WTC11 (cell line): ENCODE measurements at regions of chr6 and their contacts with region 1.

Region 1: DNA sequence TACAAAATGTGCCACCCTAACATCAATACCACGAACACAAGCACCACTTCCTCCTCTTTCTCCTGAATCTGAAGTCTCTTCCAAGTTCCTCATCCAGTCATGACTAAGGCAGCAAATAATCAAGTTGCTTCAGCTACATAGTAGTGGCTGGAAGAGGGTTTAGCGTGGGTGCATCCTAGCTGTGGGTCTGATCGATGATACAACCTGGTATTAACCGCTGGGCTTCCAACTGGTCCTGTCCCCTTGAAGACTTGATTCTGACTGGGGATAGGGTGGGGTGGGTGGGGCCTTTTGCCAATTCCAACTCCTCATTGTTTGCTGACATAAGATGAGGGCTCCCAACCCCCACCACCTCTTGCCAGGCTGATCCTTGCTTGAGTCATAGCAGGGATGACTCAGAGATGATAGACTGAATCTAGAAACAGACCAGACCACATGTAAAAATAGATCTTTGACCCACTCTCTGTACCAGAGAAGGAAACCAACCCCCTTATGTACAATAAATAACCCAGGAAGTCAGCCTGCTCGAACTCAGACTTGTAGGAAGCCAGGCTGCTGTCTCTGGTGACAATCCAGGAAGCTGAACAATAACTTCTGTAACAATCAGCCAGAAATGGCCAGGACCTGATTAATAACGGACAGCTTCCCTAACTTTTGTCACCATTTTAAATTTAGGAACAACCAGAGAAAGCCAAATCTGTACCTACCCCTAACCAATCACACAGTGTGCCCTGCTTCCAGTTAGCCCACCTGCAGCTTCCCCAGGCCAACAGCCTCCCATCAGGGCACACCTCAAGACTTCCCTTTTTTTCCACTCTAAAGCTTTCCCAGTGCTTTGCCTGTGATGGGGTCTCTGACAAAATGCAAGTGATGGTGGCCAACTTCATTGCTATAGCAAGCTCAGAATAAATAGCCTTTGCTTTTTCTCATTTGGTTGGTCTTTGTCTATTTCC is 68.9 kb upstream of the FAM184A start:
- DNase-seq: no peak
- ATAC-seq: no peak
- H3K4me3 Mint-ChIP-seq: no peak overlapping the region
- H3K27ac Mint-ChIP-seq: no peak overlapping the region
- H3K4me1 Mint-ChIP-seq: peaks cover 4% of the 10 kb centered on the region
- H3K27me3 Mint-ChIP-seq: no peaks in the 10 kb centered on the region
- CTCF ChIP-seq: no peak

Region 2: GRCh38 chr6:119129148-119129967 is 18.0 kb before region 1 on chr6:
- CTCF ChIA-PET with region 1: interaction called, 17 read pairs
- POLR2A ChIA-PET with region 1: no interaction called
- DNase-seq: no peak
- ATAC-seq: peak; percentile 77
- H3K4me3 Mint-ChIP-seq: no peak overlapping the region
- H3K27ac Mint-ChIP-seq: no peak overlapping the region
- H3K4me1 Mint-ChIP-seq: peaks cover 34% of the 10 kb centered on the region
- H3K27me3 Mint-ChIP-seq: no peaks in the 10 kb centered on the region
- CTCF ChIP-seq: peak; percentile 75

Region 3: GRCh38 chr6:119158057-119158848 is 10.9 kb after region 1 on chr6:
- CTCF ChIA-PET with region 1: interaction called, 10 read pairs
- POLR2A ChIA-PET with region 1: no interaction called
- DNase-seq: no peak
- ATAC-seq: peak; percentile 44
- H3K4me3 Mint-ChIP-seq: no peak overlapping the region
- H3K27ac Mint-ChIP-seq: no peak overlapping the region
- H3K4me1 Mint-ChIP-seq: no peaks in the 10 kb centered on the region
- H3K27me3 Mint-ChIP-seq: no peaks in the 10 kb centered on the region; the same call in 1 of the 2 replicates
- CTCF ChIP-seq: no peak

Region 4: DNA sequence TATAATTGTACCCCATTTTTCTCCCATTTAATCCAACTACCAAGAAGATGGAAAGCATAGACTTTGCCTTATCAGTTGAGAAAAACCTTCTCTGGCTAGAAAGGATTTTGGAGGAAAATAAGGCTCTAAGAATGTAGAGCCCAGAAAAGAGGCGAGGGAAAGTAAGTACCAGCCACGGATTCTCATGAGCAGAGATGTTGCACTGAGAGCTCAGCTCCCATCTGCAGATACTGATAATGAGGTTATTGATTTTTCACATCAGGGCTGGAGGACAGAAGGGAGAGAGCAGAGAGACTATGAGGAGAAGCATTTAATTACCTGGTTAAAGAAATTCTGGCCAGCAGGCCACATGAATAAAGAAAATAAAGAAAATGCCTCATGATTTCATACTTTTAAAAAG is 35.5 kb after region 1 on chr6:
- CTCF ChIA-PET with region 1: no interaction called
- POLR2A ChIA-PET with region 1: no interaction called
- DNase-seq: no peak
- ATAC-seq: no peak
- H3K4me3 Mint-ChIP-seq: no peak overlapping the region
- H3K27ac Mint-ChIP-seq: no peak overlapping the region
- H3K4me1 Mint-ChIP-seq: peaks cover 22% of the 10 kb centered on the region
- H3K27me3 Mint-ChIP-seq: no peaks in the 10 kb centered on the region
- CTCF ChIP-seq: no peak

Region 5: DNA sequence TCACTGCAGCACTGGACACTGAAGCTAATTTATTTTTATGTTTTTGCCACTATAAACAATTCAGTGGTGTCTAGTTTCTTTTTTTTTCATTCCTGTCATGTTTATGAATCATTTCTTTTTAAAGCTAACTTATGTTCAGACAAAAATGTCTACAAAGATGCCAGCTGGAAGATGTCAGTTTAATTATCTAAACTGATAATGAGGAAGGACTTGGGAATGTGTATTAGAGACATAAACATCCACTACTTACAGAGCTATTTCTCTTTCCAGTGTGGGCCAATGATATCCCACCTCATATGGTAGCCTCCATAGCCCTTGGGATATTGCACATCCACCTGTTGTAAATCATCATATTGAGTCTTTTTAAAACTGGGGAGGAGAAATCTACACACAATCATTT is 63.2 kb after region 1 on chr6:
- CTCF ChIA-PET with region 1: no interaction called
- POLR2A ChIA-PET with region 1: no interaction called
- DNase-seq: no peak
- ATAC-seq: no peak
- H3K4me3 Mint-ChIP-seq: no peak overlapping the region
- H3K27ac Mint-ChIP-seq: no peak overlapping the region
- H3K4me1 Mint-ChIP-seq: no peaks in the 10 kb centered on the region
- H3K27me3 Mint-ChIP-seq: no peaks in the 10 kb centered on the region
- CTCF ChIP-seq: no peak